ENCODE measurements at regions of chr12 and their contacts with region 1.

Region 1: GRCh38 chr12:105382771-105383622 is 52.5 kb downstream of the C12orf75 start:
- DNase-seq: peak; percentile 9
- H3K4me3 Mint-ChIP-seq: no peak overlapping the region
- H3K27ac Mint-ChIP-seq: no peak overlapping the region
- H3K4me1 Mint-ChIP-seq: no peaks in the 10 kb centered on the region
- H3K27me3 Mint-ChIP-seq: no peaks in the 10 kb centered on the region

Region 2: DNA sequence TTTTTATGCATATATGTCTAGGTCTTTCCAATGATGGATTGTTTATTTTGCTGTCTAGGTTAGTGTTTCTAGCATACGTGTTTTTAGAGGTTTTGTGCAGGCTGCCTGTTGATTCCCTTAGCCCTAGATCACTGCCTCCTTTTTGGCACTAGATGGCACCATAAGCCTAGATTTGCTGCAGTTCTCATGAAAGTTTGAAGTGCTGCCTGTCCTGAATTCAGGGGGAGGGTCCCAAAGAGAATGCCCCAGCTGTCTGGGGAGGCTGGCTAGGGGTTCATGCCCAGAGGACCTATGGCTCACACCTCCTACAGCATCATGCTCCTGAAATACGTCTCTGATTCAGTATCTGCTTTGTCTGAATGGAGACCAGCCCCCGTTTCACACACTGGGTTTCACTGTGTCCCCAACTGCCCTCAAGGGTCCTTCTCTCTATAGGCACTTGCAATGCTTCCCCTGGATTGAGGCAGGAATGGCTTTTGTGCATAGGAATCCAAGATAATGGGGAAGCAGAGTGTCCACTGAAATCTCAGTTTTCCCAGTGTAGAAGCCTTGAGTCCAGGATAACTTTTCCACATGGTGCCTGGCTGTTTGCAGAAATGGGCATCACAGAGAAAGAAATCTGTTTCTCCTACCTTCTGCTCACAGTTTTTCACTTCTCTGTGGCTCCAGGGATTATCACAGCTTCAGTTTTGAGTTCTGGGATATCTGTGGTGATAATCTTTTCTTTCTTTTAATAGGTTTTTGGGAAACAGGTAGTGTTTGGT is 1181.6 kb before region 1 on chr12:
- CTCF ChIA-PET with region 1: no interaction called
- POLR2A ChIA-PET with region 1: no interaction called
- intact Hi-C with region 1: loop called (anchors 2 kb)
- DNase-seq: peak; percentile 50
- H3K4me3 Mint-ChIP-seq: no peak overlapping the region
- H3K27ac Mint-ChIP-seq: no peak overlapping the region
- H3K4me1 Mint-ChIP-seq: no peaks in the 10 kb centered on the region
- H3K27me3 Mint-ChIP-seq: peaks cover 8% of the 10 kb centered on the region

Region 3: GRCh38 chr12:105226219-105226618 is 156.8 kb before region 1 on chr12:
- CTCF ChIA-PET with region 1: no interaction called
- POLR2A ChIA-PET with region 1: no interaction called
- intact Hi-C with region 1: loop called (anchors 5 kb)
- DNase-seq: peak; percentile 38
- H3K4me3 Mint-ChIP-seq: no peak overlapping the region
- H3K27ac Mint-ChIP-seq: no peak overlapping the region
- H3K4me1 Mint-ChIP-seq: peaks cover 56% of the 10 kb centered on the region
- H3K27me3 Mint-ChIP-seq: no peaks in the 10 kb centered on the region

Region 4: DNA sequence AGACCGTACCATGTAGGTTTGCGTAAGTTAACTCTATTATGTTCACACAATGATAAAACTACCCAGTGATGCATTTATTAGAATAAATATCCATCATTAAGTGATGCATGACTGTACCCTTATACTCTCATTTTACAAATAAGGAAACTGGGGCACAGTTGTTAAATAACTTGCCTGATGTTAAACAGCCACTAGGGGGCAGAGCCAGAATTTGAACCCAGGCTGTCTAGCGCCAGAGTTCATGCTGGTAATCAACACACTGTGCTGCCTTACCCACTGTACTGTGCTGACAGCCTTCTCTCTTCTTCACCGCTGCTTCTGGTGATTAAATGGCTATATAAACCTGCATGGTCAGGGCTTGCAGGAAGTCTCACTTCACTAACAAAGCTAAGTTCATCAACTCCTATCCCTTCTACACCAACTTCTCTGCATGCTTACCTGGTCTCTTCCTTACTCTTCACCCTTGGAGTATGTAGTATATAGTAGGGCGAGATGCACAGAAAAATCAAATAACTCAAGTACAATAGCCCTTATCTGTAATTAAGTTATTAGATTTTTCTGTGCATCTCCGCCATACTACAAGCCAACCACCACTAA is 103.4 kb before region 1 on chr12:
- CTCF ChIA-PET with region 1: interaction called, 6 read pairs
- POLR2A ChIA-PET with region 1: no interaction called
- intact Hi-C with region 1: loop called (anchors 1 kb)
- DNase-seq: peak; percentile 55
- H3K4me3 Mint-ChIP-seq: no peak overlapping the region
- H3K27ac Mint-ChIP-seq: no peak overlapping the region
- H3K4me1 Mint-ChIP-seq: no peaks in the 10 kb centered on the region
- H3K27me3 Mint-ChIP-seq: peaks cover 6% of the 10 kb centered on the region

Region 5: DNA sequence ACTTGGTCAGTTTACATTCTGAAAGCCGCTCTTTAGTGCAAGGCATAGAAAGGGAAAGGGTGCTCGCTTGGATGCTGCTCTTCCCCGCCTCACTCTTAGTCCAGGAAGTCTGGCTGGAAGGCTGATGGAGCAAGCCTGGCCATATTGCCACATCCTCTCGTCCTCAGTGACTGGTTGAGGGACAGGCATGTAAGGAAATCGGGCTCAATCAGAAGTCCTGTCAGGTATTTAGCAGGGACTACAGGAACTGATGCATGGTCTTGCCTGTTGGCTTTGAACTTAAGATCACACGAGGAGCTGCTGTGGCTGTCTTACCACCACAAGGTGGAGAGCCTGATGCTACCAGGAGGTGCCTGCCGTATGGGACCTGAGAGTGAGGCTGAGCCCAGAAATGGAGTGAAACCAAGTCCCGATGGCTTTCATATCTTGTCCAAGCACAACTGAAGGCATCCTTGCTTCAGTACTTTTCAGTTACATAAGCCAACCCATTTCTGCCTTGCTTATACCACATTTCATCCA is 63.2 kb before region 1 on chr12:
- CTCF ChIA-PET with region 1: interaction called, 9 read pairs
- POLR2A ChIA-PET with region 1: interaction called, 3 read pairs
- intact Hi-C with region 1: loop called (anchors 2 kb)
- DNase-seq: no peak
- H3K4me3 Mint-ChIP-seq: no peak overlapping the region
- H3K27ac Mint-ChIP-seq: no peak overlapping the region
- H3K4me1 Mint-ChIP-seq: peaks cover 12% of the 10 kb centered on the region
- H3K27me3 Mint-ChIP-seq: no peaks in the 10 kb centered on the region

Region 6: DNA sequence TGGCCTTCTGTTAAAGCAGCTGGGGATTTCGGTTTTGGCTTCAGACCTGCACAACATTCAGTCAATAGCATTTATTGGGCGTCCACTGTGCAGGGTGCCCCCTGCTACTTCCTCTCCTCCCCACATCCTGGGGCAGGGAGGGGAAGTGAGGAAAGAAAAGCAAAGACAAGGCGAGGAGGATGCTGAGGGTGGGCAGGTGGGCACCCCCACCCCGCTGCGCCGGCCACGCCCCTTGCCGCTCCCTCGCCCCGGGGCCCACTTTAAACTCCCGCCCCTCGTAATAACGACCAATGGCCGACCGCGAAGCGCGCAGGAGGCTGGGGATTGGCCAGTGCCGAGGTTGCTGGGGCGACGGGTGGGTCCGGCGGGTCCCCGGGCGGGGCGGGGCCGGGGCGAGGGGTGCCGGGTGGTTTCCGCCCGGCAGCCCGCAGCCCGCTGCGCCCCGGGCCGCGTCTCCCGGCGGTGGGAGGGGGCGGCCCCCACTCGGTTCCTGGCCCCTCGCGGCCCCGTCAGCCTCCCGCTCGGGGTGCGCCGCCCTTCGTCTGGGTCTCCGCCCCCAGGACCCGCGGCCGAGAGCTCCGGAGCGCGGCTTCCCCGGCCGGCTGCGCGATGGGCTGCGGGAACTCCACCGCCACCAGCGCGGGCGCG is 52.6 kb before region 1 on chr12 and contains the start of gene C12orf75:
- CTCF ChIA-PET with region 1: interaction called, 5 read pairs
- POLR2A ChIA-PET with region 1: no interaction called
- intact Hi-C with region 1: loop called (anchors 5 kb)
- DNase-seq: peak; percentile 93
- H3K4me3 Mint-ChIP-seq: peak within 1 kb of the TSS; percentile 74
- H3K27ac Mint-ChIP-seq: peak within 1 kb of the TSS; percentile 74
- H3K4me1 Mint-ChIP-seq: peaks cover 39% of the 10 kb centered on the region
- H3K27me3 Mint-ChIP-seq: no peaks in the 10 kb centered on the region
- total RNA-seq, gene C12orf75: 73.7 to 79.7 TPM

Measured in activated CD4-positive, alpha-beta memory T cell treated with anti-CD3 and anti-CD28 coated beads for 36 hours (primary cell).